IMR-90 (cell line): ENCODE measurements at regions of chr10 and their contacts with region 1.

Region 1: GRCh38 chr10:22500656-22501340 is 155.5 kb downstream of the SPAG6 start:
- DNase-seq: no peak
- ATAC-seq: no peak
- H3K4me3 ChIP-seq: no peak overlapping the region
- H3K27ac ChIP-seq: no peak overlapping the region
- H3K4me1 ChIP-seq: no peaks in the 10 kb centered on the region
- H3K27me3 ChIP-seq: peaks cover 14% of the 10 kb centered on the region
- CTCF ChIP-seq: no peak
- POLR2A ChIP-seq: no peak
- RAD21 ChIP-seq: no peak

Region 2: GRCh38 chr10:22542773-22543172 is 42.0 kb after region 1 on chr10:
- CTCF ChIA-PET with region 1: no interaction called
- POLR2A ChIA-PET with region 1: no interaction called
- dilution Hi-C with region 1: no loop called
- in situ Hi-C with region 1: no loop called
- intact Hi-C with region 1: loop called (anchors 1 kb)
- DNase-seq: no peak
- ATAC-seq: no peak
- H3K4me3 ChIP-seq: no peak overlapping the region
- H3K27ac ChIP-seq: no peak overlapping the region
- H3K4me1 ChIP-seq: no peaks in the 10 kb centered on the region
- H3K27me3 ChIP-seq: no peaks in the 10 kb centered on the region
- CTCF ChIP-seq: no peak
- POLR2A ChIP-seq: no peak
- RAD21 ChIP-seq: no peak

Region 3: DNA sequence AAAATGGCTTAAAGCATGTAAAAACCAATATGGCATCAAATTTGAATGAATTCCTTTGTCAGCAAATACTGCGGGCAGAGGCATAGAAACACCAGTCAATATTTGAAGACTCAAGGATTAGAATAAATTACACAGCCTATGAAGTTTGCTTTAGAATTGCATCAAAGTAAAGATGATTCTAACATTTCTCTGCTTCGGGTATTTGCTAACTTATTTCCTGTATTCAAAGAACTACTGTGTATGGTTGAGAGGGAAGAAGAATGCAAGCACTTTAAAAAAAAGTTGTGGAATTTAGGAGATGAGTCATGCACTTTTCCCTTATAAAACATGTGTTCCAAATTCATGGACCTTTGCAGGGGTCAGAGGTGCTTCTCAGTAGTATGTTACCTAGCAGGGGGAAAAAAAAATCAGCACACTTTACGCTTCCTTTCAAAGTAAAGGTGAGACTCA is 123.5 kb after region 1 on chr10:
- CTCF ChIA-PET with region 1: no interaction called
- POLR2A ChIA-PET with region 1: no interaction called
- dilution Hi-C with region 1: no loop called
- in situ Hi-C with region 1: no loop called
- intact Hi-C with region 1: no loop called
- DNase-seq: peak; percentile 82
- ATAC-seq: peak; percentile 72
- H3K4me3 ChIP-seq: no peak overlapping the region
- H3K27ac ChIP-seq: no peak overlapping the region
- H3K4me1 ChIP-seq: peaks cover 26% of the 10 kb centered on the region
- H3K27me3 ChIP-seq: no peaks in the 10 kb centered on the region
- CTCF ChIP-seq: no peak
- POLR2A ChIP-seq: no peak
- RAD21 ChIP-seq: no peak